CD8-positive, alpha-beta memory T cell (primary cell): ENCODE measurements at regions of chr1 and their contacts with region 1.

Region 1: DNA sequence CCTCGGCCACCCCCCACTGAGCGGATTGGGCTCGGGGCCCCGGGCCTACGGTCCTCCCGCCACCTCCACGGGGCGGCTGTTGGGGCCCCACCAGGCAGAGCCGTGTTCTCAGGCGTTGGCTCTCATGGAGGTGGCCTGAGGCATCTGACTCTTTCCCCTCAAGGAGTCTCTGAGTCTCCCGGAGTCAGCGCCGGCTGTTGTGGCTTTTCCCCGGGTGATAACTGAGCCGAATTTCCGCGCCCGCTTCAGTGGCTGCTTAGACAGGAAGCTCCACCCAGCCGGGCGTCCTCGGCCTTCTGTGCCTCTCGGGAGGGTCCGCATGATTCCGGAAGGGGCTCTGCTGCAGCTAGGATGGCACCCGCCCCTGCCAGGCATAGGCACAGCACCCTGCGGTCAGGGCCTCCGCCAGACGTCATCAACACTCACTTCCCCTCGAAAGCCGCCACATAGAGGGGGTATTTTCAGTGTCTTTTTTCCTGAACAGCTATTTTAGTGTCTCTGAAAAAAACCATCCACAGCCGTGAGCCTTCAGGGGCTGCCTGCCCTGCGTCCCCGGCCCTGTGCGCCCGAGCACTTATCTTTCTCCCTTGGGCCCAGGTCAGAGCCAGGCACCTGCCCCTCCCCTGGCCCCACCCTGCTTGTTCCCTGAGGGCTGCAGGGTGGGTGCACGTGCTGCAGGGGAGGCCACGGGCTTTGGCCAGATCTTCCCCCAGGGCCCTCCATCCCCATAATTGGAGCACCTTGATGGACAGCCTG is 72.9 kb downstream of the SKI start:
- DNase-seq: peak; percentile 92 to 98 (median 97)
- H3K4me3 ChIP-seq: peak overlapping the region; percentile 52
- H3K4me3 Mint-ChIP-seq: peak overlapping the region; percentile 82 to 93 (median 86)
- H3K27ac ChIP-seq: peak overlapping the region; percentile 97
- H3K27ac Mint-ChIP-seq: peak overlapping the region; percentile 98 to 100 (median 99)
- H3K4me1 ChIP-seq: peaks cover 64% of the 10 kb centered on the region
- H3K4me1 Mint-ChIP-seq: peaks cover 43 to 73% (median 44%) of the 10 kb centered on the region in 3 donors
- H3K27me3 ChIP-seq: no peaks in the 10 kb centered on the region
- H3K27me3 Mint-ChIP-seq: no peaks in the 10 kb centered on the region

Region 2: DNA sequence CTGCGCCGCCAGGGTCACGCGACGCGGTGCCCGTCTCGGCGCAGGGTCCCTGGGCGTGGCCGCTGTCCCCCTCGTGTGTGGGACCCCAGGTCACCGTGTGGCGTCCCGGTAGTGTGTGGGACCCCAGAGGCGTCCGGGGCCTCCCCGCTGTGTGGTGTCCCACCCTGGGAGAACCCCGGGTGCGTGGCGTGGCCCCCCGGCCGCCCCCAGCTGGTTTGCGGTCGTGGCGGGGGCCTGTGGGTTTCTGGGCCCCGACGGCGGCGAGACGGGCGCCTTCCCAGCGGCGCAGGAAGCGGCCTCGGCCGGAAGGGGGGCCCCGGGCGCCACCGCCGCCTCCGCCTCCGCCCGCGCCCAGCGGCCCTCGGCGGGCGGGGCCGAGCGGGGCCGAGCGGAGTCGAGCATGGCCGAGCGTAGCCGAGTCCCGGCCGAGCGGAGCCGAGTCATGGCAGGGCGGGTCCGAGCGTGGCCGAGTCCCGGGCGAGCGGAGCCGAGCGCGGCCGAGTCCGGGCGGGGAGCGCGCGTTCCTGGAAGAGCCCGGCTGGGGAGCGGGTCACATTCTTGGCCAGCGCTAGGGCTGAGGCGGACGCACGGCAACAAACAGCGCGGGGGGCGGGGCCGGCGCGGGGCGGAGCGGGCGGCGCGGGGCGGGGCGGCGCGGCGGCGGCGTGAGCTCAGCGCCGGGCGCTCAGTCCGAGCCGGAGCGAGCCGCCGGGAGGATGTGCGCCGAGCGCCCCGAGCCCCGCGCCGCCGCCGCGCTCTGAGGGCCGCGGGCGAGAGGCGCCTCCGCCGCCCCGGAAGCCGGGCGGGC is 73.5 kb before region 1 on chr1:
- CTCF ChIA-PET with region 1: interaction called, 7 read pairs
- POLR2A ChIA-PET with region 1: interaction called, 12 read pairs
- DNase-seq: peak; percentile 86 to 96 (median 95)
- H3K4me3 ChIP-seq: no peak overlapping the region
- H3K4me3 Mint-ChIP-seq: peak overlapping the region in 6 of 7 donors; percentile 61 to 90 (median 74)
- H3K27ac ChIP-seq: peak overlapping the region; percentile 51
- H3K27ac Mint-ChIP-seq: peak overlapping the region in 4 of 8 donors; percentile 60 to 86 (median 74)
- H3K4me1 ChIP-seq: peaks cover 26% of the 10 kb centered on the region
- H3K4me1 Mint-ChIP-seq: peaks cover 27 to 40% (median 36%) of the 10 kb centered on the region in 3 donors
- H3K27me3 ChIP-seq: no peaks in the 10 kb centered on the region
- H3K27me3 Mint-ChIP-seq: peaks cover 0 to 12% of the 10 kb centered on the region in 2 donors

Region 3: GRCh38 chr1:2233997-2234761 is 66.8 kb before region 1 on chr1:
- CTCF ChIA-PET with region 1: interaction called, 7 read pairs
- POLR2A ChIA-PET with region 1: interaction called, 12 read pairs
- DNase-seq: peak; percentile 77 to 94 (median 82)
- H3K4me3 ChIP-seq: peak overlapping the region; percentile 91
- H3K4me3 Mint-ChIP-seq: peak overlapping the region; percentile 84 to 99 (median 94)
- H3K27ac ChIP-seq: peak overlapping the region; percentile 64
- H3K27ac Mint-ChIP-seq: peak overlapping the region; percentile 97 to 100 (median 98)
- H3K4me1 ChIP-seq: peaks cover 92% of the 10 kb centered on the region
- H3K4me1 Mint-ChIP-seq: peaks cover 75 to 86% (median 76%) of the 10 kb centered on the region in 3 donors
- H3K27me3 ChIP-seq: no peaks in the 10 kb centered on the region
- H3K27me3 Mint-ChIP-seq: peaks cover 0 to 11% of the 10 kb centered on the region in 2 donors

Region 4: DNA sequence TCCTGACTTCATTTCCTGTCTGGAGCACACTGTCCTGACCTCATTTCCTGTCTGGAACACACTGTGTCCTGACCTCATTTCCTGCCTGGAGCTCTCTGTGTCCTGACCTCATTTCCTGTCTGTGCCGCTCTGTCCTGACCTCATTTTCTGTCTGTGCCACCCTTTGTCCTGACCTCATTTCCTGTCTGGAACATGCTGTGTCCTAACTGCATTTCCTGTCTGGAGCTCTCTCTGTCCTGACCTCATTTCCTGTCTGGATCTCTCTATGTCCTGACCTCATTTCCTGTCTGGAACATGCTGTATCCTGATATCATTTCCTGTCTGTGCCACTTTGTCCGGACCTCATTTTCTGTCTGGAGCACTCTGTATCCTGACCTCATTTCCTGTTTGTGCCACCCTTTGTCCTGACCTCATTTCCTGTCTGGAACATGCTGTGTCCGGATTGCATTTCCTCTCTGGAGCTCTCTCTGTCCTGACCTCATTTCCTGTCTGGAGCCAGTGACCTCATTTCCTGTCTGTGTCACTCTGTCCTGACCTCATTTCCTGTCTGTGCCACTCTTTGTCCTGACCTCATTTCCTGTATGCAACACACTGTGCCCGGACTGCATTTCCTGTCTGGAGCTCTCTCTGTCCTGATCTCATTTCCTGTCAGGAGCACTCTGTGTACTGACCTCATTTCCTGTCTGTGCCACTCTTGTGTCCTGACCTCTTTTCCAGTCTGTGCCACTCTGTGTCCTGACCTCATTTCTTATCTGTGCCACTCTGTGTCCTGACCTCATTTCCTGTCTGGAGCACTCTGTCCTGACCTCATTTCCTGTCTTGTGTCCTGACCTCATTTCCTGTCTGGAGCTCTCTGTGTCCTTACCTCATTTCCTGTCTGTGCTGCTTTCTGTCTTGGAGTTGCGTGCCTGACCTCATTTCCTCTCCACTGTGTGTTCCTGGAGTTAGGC is 45.3 kb before region 1 on chr1:
- CTCF ChIA-PET with region 1: interaction called, 14 read pairs
- POLR2A ChIA-PET with region 1: interaction called, 25 read pairs
- DNase-seq: peak; percentile 62 to 94 (median 91)
- H3K4me3 ChIP-seq: no peak overlapping the region
- H3K4me3 Mint-ChIP-seq: no peak overlapping the region
- H3K27ac ChIP-seq: peak overlapping the region; percentile 89
- H3K27ac Mint-ChIP-seq: no peak overlapping the region
- H3K4me1 ChIP-seq: peaks cover 85% of the 10 kb centered on the region
- H3K4me1 Mint-ChIP-seq: peaks cover 45 to 60% (median 49%) of the 10 kb centered on the region in 3 donors
- H3K27me3 ChIP-seq: no peaks in the 10 kb centered on the region
- H3K27me3 Mint-ChIP-seq: peaks cover 0 to 2% of the 10 kb centered on the region in 2 donors

Region 5: DNA sequence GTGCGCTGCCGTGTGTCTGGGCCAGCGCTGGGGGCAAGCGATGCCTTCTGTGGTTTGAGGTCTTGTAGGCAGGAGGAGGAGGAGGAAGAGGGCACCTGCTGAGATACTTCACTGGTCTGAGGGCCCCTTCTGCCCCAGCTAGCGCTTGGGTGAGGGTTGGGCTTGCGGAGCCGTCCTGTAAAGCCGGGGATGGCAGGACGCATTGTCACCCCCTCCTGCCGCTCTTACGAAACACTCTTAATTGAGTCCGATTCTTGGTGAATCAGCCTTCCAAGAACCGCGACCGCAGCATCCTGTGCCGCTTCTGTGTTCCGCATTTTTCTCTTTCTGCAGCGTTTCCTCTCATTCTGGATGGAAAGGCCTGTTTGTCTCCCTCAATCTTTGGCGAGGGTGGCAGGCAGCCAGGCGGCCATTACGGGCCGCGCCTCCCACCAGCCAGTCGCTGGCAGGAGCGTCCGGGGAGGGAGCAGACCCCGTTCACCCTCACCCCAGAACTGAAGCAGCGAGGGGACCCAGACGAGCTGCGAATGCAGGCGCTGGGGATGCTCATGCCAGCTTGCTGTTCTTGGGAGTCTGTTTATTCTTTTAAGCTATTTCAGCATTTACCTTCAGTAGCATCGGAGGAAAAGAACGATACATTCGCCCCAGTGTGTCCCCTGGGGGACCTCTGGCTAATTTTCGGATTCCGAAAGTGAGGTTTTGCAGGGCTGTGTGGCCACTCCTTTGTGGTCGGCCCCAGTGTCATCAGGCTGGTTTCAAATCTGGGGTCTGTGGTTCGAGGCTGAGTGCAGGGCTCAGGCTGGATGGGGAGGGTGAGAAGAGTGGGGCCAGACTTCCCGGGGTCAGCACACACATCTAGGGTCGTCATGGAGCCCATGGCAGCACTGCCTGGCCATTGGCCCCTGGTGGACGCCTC is 10.2 kb before region 1 on chr1:
- CTCF ChIA-PET with region 1: interaction called, 16 read pairs
- POLR2A ChIA-PET with region 1: interaction called, 6 read pairs
- DNase-seq: peak; percentile 63 to 83 (median 76)
- H3K4me3 ChIP-seq: peak overlapping the region; percentile 47
- H3K4me3 Mint-ChIP-seq: peak overlapping the region; percentile 81 to 93 (median 83)
- H3K27ac ChIP-seq: peak overlapping the region; percentile 67
- H3K27ac Mint-ChIP-seq: peak overlapping the region; percentile 92 to 99 (median 97)
- H3K4me1 ChIP-seq: peaks cover 85% of the 10 kb centered on the region
- H3K4me1 Mint-ChIP-seq: peaks cover 60 to 93% (median 72%) of the 10 kb centered on the region in 3 donors
- H3K27me3 ChIP-seq: no peaks in the 10 kb centered on the region
- H3K27me3 Mint-ChIP-seq: no peaks in the 10 kb centered on the region

Region 6: GRCh38 chr1:2314803-2315673 is 14.0 kb after region 1 on chr1:
- CTCF ChIA-PET with region 1: interaction called, 7 read pairs
- POLR2A ChIA-PET with region 1: interaction called, 13 read pairs
- DNase-seq: peak; percentile 58 to 84 (median 75)
- H3K4me3 ChIP-seq: peak overlapping the region; percentile 55
- H3K4me3 Mint-ChIP-seq: peak overlapping the region in 4 of 7 donors; percentile 41 to 74 (median 56)
- H3K27ac ChIP-seq: peak overlapping the region; percentile 38
- H3K27ac Mint-ChIP-seq: peak overlapping the region in 7 of 8 donors; percentile 30 to 96 (median 59)
- H3K4me1 ChIP-seq: peaks cover 44% of the 10 kb centered on the region
- H3K4me1 Mint-ChIP-seq: peaks cover 7 to 49% (median 10%) of the 10 kb centered on the region in 3 donors
- H3K27me3 ChIP-seq: no peaks in the 10 kb centered on the region
- H3K27me3 Mint-ChIP-seq: no peaks in the 10 kb centered on the region